ENCODE measurements at regions of chr2 and their contacts with region 1.

Region 1: DNA sequence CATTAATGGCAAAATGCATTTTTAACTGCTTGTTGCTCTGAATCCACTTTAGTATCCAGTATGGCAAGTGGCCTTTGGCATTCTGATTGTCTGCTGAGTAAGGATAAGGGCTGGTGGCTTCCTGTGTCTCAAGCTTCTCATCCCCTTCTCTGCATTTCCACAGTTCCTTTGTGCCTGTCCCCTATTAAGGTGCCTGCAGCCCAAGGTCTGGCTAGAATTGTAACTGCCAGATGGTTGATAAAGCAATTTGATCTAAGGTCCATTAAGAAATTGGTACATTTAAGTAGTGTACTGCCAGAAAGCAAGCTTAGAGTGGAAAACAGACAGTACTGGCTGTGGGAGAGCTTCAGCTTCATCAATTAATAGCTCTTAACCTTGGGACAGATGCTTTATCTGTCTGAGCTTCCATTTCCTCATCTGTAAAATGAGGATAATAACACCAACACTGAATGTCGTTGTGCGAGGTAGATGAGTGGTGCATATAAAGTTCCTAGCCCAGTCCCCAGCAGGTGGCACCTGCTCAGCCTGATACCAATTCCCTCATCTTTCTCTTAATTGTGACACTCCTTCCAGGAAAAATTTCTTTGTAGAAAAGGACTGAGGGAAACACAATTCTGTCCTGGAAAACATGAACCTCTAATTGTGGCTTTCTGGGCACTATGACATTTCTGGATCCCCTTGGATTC is 570.6 kb upstream of the GCFC2 start:
- DNase-seq: peak; percentile 30
- H3K4me3 ChIP-seq: no peak overlapping the region
- H3K27ac ChIP-seq: peak overlapping the region in 1 of 2 experiments; percentile 100; a peak in 2 of 4 replicates
- H3K4me1 ChIP-seq: peaks cover 6 to 30% of the 10 kb centered on the region in 2 experiments; a peak in 3 of 4 replicates
- H3K27me3 ChIP-seq: no peaks in the 10 kb centered on the region
- CTCF ChIP-seq: no peak
- EP300 ChIP-seq: peak in 1 of 2 experiments; percentile 99; a peak in 2 of 4 replicates
- RAD21 ChIP-seq: peak; percentile 61

Region 2: GRCh38 chr2:76268928-76269610 is 12.2 kb before region 1 on chr2:
- CTCF ChIA-PET with region 1: interaction called, 9 read pairs
- POLR2A ChIA-PET with region 1: interaction called, 10 read pairs
- DNase-seq: peak; percentile 25
- H3K4me3 ChIP-seq: no peak overlapping the region
- H3K27ac ChIP-seq: peak overlapping the region; percentile 18 to 99; a peak in 3 of 4 replicates
- H3K4me1 ChIP-seq: peaks cover 10 to 14% of the 10 kb centered on the region in 2 experiments; a peak in 3 of 4 replicates
- H3K27me3 ChIP-seq: no peaks in the 10 kb centered on the region
- CTCF ChIP-seq: no peak
- EP300 ChIP-seq: peak in 1 of 2 experiments; percentile 85; a peak in 2 of 4 replicates
- RAD21 ChIP-seq: peak; percentile 34; the same call in 1 of the 2 replicates

Region 3: DNA sequence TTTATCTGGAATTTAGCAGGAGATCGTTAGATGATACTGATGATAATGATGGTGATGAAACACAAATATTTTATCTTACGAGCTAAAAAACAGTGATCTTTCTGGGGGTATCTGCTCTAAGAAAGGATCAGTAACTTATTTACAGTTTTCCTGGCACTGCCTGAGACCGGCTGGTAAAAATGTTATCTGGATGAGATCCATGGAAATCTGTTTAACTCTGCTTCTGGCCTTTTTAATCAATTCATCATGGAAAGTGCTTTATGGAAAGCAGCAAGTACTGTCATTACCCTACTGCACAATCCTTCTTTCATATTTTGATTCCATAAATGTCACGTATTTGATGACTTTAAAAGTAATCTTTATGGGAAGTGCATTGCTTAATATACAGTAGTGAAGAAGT is 42.1 kb after region 1 on chr2:
- CTCF ChIA-PET with region 1: interaction called, 6 read pairs
- POLR2A ChIA-PET with region 1: interaction called, 12 read pairs
- DNase-seq: peak; percentile 38
- H3K4me3 ChIP-seq: no peak overlapping the region
- H3K27ac ChIP-seq: peak overlapping the region in 1 of 2 experiments; percentile 97; a peak in 2 of 4 replicates
- H3K4me1 ChIP-seq: peaks cover 0 to 11% of the 10 kb centered on the region in 2 experiments; a peak in 2 of 4 replicates
- H3K27me3 ChIP-seq: no peaks in the 10 kb centered on the region
- CTCF ChIP-seq: no peak
- EP300 ChIP-seq: peak in 1 of 2 experiments; percentile 99; a peak in 2 of 4 replicates
- RAD21 ChIP-seq: peak; percentile 31